ENCODE measurements at regions of chr11 and their contacts with region 1.

Region 1: DNA sequence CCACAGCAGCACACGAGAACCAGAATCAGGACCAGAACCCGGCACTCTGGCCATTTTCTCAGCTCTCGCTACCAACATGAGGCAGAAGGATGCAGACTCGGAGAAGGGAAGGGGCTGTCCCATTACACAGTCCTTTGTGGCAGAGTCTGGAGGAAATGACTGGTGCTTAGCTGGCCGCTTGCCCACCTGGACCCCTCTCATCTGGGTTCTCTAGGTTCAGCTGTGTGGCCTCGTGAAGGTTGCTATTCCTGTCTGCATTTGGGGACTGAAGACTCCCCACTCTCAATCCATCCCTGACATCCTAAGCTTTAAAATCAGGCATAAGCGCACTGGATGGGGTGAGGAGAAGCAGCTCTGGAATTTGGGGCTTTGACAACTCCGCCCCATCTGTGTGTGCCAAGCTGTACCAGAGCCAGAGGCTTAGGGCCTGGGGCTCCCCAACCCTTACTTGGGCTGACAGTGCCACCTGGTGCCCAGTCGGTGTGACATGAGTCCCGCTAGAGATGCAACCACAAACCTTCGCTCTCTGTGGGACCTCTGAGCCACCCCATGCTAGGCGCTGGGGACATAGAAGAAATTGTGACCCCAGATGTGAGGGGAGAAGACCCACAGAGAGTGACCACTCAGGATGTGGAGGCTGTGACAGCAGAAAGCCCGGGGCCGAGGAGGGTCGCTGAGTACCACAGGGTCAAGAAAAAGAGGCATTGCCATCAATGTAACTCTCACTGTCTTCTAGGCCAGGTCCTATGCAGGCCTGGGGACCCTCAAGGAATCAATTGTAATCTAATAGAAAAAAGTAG is 35.9 kb upstream of the FCHSD2 start:
- DNase-seq: peak; percentile 72
- ATAC-seq: peak; percentile 94
- H3K4me3 Mint-ChIP-seq: no peak overlapping the region
- H3K27ac Mint-ChIP-seq: peak overlapping the region; percentile 87
- H3K4me1 Mint-ChIP-seq: peaks cover 42% of the 10 kb centered on the region
- H3K27me3 Mint-ChIP-seq: no peaks in the 10 kb centered on the region
- CTCF ChIP-seq: peak; percentile 43

Region 2: GRCh38 chr11:72378704-72379384 is 799.1 kb before region 1 on chr11:
- CTCF ChIA-PET with region 1: no interaction called
- POLR2A ChIA-PET with region 1: no interaction called
- intact Hi-C with region 1: no loop called
- DNase-seq: no peak
- ATAC-seq: no peak
- H3K4me3 Mint-ChIP-seq: no peak overlapping the region
- H3K27ac Mint-ChIP-seq: no peak overlapping the region
- H3K4me1 Mint-ChIP-seq: no peaks in the 10 kb centered on the region
- H3K27me3 Mint-ChIP-seq: no peaks in the 10 kb centered on the region
- CTCF ChIP-seq: no peak

Region 3: GRCh38 chr11:72683782-72684200 is 494.2 kb before region 1 on chr11:
- CTCF ChIA-PET with region 1: interaction called, 7 read pairs
- POLR2A ChIA-PET with region 1: no interaction called
- intact Hi-C with region 1: loop called (anchors 5 kb)
- DNase-seq: peak; percentile 70
- ATAC-seq: peak; percentile 79
- H3K4me3 Mint-ChIP-seq: no peak overlapping the region
- H3K27ac Mint-ChIP-seq: no peak overlapping the region
- H3K4me1 Mint-ChIP-seq: peaks cover 1% of the 10 kb centered on the region
- H3K27me3 Mint-ChIP-seq: no peaks in the 10 kb centered on the region
- CTCF ChIP-seq: peak; percentile 49

Region 4: DNA sequence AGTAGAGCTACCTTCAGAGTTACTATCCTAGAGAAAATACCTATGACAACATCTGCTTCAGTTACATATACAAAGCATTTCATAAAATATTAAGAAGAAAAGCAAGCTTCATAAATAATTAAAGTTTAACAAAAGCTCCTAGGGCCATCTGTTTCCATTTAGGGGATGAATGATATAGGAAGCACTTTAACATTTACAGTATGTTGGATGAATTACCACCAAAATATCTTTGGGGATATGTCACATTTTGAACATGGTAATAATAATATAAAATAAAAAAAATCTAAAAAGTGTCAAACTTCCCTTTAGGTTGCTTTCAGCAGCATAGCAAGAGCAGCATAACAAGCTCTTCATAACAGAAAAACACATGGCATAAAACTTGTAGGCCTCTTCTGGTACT is 259.1 kb before region 1 on chr11:
- CTCF ChIA-PET with region 1: interaction called, 130 read pairs
- POLR2A ChIA-PET with region 1: interaction called, 4 read pairs
- intact Hi-C with region 1: loop called (anchors 1 kb)
- DNase-seq: no peak
- ATAC-seq: no peak
- H3K4me3 Mint-ChIP-seq: no peak overlapping the region
- H3K27ac Mint-ChIP-seq: no peak overlapping the region
- H3K4me1 Mint-ChIP-seq: peaks cover 2% of the 10 kb centered on the region
- H3K27me3 Mint-ChIP-seq: no peaks in the 10 kb centered on the region
- CTCF ChIP-seq: no peak

Region 5: GRCh38 chr11:73047773-73048371 is 130.1 kb before region 1 on chr11:
- CTCF ChIA-PET with region 1: interaction called, 17 read pairs
- POLR2A ChIA-PET with region 1: interaction called, 4 read pairs
- intact Hi-C with region 1: loop called (anchors 5 kb)
- DNase-seq: no peak
- ATAC-seq: peak; percentile 85
- H3K4me3 Mint-ChIP-seq: peak overlapping the region; percentile 64
- H3K27ac Mint-ChIP-seq: peak overlapping the region; percentile 93
- H3K4me1 Mint-ChIP-seq: peaks cover 74% of the 10 kb centered on the region
- H3K27me3 Mint-ChIP-seq: no peaks in the 10 kb centered on the region
- CTCF ChIP-seq: no peak

Region 6: DNA sequence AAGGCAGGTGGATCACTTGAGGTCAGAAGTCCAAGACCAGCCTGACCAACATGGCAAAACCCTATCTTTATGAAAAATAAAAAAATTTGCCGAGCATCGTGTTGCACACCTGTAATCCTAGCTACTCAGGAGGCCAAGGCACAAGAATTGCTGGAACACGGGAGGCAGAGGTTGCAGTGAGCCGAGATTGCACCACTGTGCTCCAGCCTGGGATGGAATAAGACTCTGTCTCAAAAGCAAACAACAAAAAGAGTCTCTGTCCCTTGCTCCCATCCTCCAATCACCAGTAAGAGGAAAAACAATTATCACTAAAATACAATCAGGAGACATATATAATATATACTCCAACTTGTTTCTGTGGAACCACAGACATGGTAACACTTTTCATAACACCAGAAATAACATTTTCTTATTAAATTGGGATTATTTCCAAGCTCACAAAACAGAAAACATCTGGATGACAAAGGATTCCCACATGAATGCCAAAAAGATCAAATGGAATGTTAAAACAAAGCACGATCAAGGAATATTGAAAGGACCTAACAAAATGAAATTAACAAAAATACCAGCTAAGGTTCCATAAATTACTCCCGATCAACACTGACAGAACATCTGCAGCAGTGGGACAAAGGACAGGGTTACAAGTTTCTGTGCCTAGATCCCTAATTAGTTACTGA is 51.0 kb before region 1 on chr11:
- CTCF ChIA-PET with region 1: interaction called, 11 read pairs
- POLR2A ChIA-PET with region 1: interaction called, 4 read pairs
- intact Hi-C with region 1: no loop called
- DNase-seq: no peak
- ATAC-seq: no peak
- H3K4me3 Mint-ChIP-seq: no peak overlapping the region
- H3K27ac Mint-ChIP-seq: peak overlapping the region; percentile 32
- H3K4me1 Mint-ChIP-seq: peaks cover 58% of the 10 kb centered on the region
- H3K27me3 Mint-ChIP-seq: no peaks in the 10 kb centered on the region
- CTCF ChIP-seq: no peak

Region 7: GRCh38 chr11:73164803-73165540 is 13.0 kb before region 1 on chr11:
- CTCF ChIA-PET with region 1: interaction called, 57 read pairs
- POLR2A ChIA-PET with region 1: interaction called, 56 read pairs
- intact Hi-C with region 1: no loop called
- DNase-seq: no peak
- ATAC-seq: peak; percentile 57
- H3K4me3 Mint-ChIP-seq: peak overlapping the region; percentile 16
- H3K27ac Mint-ChIP-seq: peak overlapping the region; percentile 26
- H3K4me1 Mint-ChIP-seq: peaks cover 78% of the 10 kb centered on the region
- H3K27me3 Mint-ChIP-seq: no peaks in the 10 kb centered on the region
- CTCF ChIP-seq: no peak

Region 8: DNA sequence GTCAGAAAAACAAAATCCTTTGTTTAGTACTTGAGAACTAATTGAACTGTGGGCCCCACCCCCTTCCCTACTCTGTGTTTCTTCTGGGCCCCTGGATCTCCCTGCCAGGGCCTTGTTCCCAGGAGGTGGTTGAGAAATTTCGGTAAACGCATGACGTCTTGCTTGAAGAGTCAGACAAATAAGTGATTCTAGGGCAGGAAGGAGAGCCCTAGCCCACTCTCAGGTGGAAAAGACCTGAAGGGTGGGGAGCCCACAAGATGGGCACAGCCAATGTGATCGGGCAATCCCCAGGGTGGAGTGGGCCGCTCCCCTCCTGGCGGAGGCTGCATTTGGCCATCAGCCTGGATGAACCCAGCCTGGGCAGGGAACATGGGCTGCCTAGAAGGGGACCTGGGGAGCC is 23.3 kb after region 1 on chr11:
- CTCF ChIA-PET with region 1: no interaction called
- POLR2A ChIA-PET with region 1: no interaction called
- intact Hi-C with region 1: no loop called
- DNase-seq: no peak
- ATAC-seq: no peak
- H3K4me3 Mint-ChIP-seq: no peak overlapping the region
- H3K27ac Mint-ChIP-seq: no peak overlapping the region
- H3K4me1 Mint-ChIP-seq: peaks cover 4% of the 10 kb centered on the region
- H3K27me3 Mint-ChIP-seq: peaks cover 4% of the 10 kb centered on the region
- CTCF ChIP-seq: no peak

Region 9: GRCh38 chr11:73288873-73289707 is 111.1 kb after region 1 on chr11:
- CTCF ChIA-PET with region 1: interaction called, 25 read pairs
- POLR2A ChIA-PET with region 1: interaction called, 6 read pairs
- intact Hi-C with region 1: no loop called
- DNase-seq: peak; percentile 66
- ATAC-seq: peak; percentile 90
- H3K4me3 Mint-ChIP-seq: peak overlapping the region; percentile 68
- H3K27ac Mint-ChIP-seq: peak overlapping the region; percentile 88
- H3K4me1 Mint-ChIP-seq: peaks cover 33% of the 10 kb centered on the region
- H3K27me3 Mint-ChIP-seq: no peaks in the 10 kb centered on the region
- CTCF ChIP-seq: peak; percentile 59

Region 10: GRCh38 chr11:73585834-73586575 is 408.0 kb after region 1 on chr11:
- CTCF ChIA-PET with region 1: no interaction called
- POLR2A ChIA-PET with region 1: no interaction called
- intact Hi-C with region 1: no loop called
- DNase-seq: no peak
- ATAC-seq: no peak
- H3K4me3 Mint-ChIP-seq: no peak overlapping the region
- H3K27ac Mint-ChIP-seq: no peak overlapping the region
- H3K4me1 Mint-ChIP-seq: peaks cover 8% of the 10 kb centered on the region
- H3K27me3 Mint-ChIP-seq: no peaks in the 10 kb centered on the region
- CTCF ChIP-seq: no peak